ENCODE measurements at regions of chr19 and their contacts with region 1.

Region 1: DNA sequence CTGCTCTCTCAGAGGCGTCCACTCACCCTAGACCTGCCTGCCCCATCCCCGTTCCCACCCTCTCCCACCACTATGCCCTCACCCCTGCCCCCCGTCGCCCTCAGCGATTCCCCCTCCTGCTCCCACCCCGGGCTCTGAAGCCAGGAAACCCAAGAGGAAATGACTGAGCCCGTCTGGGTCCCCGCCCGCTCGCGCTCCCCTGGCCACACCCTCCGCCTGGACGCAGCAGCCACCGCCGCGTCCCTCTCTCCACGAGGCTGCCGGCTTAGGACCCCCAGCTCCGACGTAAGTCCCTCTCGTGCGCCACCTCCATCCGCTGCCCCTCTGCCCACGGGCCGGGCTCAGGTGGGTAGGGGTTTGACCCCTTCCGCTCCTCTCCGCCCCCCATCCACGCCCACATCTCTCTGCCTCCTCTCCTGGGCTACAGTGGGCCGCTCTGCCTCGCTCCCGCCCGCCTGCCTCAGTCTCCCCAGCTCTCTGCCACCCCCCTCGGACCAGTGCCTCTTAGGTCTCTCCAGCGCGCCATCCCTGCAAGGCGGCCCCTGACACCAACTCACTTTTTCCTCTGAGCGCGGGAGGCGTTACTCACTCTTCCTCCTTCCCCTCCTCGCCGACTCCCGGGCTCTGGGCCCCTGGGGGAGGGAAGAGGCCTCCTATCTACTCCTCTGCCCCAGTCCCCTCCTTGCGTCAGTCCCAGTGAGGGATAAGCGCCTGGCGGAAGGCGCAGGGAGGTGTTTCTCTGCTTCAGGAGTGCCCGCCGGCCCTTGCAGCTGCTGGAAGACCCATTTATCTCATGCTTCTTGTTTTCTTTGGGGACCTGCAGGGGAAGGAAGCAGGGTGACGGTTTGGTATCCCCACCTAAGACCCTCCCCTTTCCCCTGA is at the start of gene FXYD5:
- DNase-seq: peak; percentile 93
- H3K4me3 Mint-ChIP-seq: peak within 1 kb of the TSS; percentile 98
- H3K27ac Mint-ChIP-seq: peak within 1 kb of the TSS; percentile 99
- H3K4me1 Mint-ChIP-seq: peaks cover 47% of the 10 kb centered on the region
- H3K27me3 Mint-ChIP-seq: no peaks in the 10 kb centered on the region
- total RNA-seq, gene FXYD5: 289 to 294 TPM

Region 2: DNA sequence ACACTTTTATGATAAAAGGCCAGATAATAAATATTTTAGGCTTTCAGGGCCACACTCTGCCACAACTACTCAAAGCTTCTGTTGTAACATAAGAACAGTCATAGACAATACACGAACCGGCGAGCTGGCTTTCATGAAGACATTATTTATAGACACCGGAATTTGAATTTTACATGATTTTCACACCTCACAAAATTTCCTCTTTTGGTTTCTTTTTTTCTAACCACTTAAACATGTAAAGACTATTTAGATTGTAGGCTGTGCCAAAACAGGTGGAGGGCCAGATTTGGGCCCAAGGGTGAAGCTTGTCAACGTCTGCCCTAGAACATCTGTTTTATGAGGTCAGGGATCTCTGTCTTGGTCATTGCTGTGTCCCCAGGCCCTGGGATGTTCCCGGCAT is 68.8 kb before region 1 on chr19:
- CTCF ChIA-PET with region 1: no interaction called
- intact Hi-C with region 1: no loop called
- DNase-seq: no peak
- H3K4me3 Mint-ChIP-seq: no peak overlapping the region
- H3K27ac Mint-ChIP-seq: no peak overlapping the region
- H3K4me1 Mint-ChIP-seq: peaks cover 1% of the 10 kb centered on the region
- H3K27me3 Mint-ChIP-seq: peaks cover 5% of the 10 kb centered on the region

Region 3: GRCh38 chr19:35170156-35171020 is 15.6 kb after region 1 on chr19:
- CTCF ChIA-PET with region 1: interaction called, 3 read pairs
- intact Hi-C with region 1: loop called (anchors 2 kb)
- DNase-seq: no peak
- H3K4me3 Mint-ChIP-seq: no peak overlapping the region
- H3K27ac Mint-ChIP-seq: peak overlapping the region; percentile 80
- H3K4me1 Mint-ChIP-seq: peaks cover 51% of the 10 kb centered on the region
- H3K27me3 Mint-ChIP-seq: no peaks in the 10 kb centered on the region

Region 4: DNA sequence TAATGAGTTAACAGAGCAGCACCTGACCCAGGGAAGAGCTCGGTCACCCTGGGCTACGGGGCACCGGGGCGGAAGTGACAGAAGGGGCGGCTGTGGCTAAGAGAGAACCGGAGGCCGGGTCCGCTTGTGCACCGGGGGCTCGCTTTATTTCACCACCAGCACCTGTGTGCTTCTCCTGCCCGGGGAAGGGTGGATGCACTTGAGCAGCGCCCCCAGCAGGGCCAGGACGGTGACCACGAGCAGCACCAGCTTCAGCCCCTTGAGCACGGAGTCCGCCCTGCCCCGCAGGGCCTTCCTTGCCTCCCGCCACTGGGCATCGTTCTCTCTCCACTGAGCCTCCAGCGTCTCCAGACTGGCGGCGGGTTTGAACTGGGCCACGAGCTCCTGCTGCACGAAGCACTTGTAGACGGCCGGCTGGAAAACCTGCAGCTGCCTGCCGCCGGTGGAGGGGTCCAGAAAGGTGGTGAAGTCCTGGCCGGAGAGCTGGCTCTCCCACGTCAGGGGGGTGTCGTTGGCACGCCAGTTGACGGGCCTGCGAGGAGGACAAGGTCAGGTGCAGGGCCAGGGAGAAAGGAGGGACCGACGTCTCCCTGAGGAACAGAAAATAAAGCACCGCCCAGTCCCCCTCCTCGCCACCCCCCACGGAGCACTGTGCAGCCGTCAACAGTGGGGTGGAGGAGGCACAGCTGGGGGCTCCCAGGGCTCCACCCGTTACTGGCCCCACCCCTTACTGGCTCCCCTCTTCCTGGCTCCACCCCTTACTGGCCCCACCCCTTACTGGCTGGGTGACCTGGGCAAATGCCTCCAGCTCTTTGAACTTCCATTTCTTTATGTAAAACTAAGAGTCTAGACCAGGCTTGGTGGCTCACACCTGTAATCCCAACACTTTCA is 70.2 kb after region 1 on chr19:
- CTCF ChIA-PET with region 1: no interaction called
- intact Hi-C with region 1: no loop called
- DNase-seq: peak; percentile 54
- H3K4me3 Mint-ChIP-seq: no peak overlapping the region
- H3K27ac Mint-ChIP-seq: no peak overlapping the region
- H3K4me1 Mint-ChIP-seq: peaks cover 27% of the 10 kb centered on the region
- H3K27me3 Mint-ChIP-seq: no peaks in the 10 kb centered on the region

Region 5: GRCh38 chr19:35318650-35319448 is 164.1 kb after region 1 on chr19:
- CTCF ChIA-PET with region 1: no interaction called
- intact Hi-C with region 1: no loop called
- DNase-seq: peak; percentile 52
- H3K4me3 Mint-ChIP-seq: no peak overlapping the region
- H3K27ac Mint-ChIP-seq: no peak overlapping the region
- H3K4me1 Mint-ChIP-seq: peaks cover 10% of the 10 kb centered on the region
- H3K27me3 Mint-ChIP-seq: peaks cover 2% of the 10 kb centered on the region